Caco-2 (cell line): ENCODE measurements at regions of chr17 and their contacts with region 1.

Region 1: GRCh38 chr17:7056386-7056785 is 12.5 kb upstream of the SLC16A11 start:
- DNase-seq: no peak
- H3K4me3 ChIP-seq: no peak overlapping the region
- H3K4me3 Mint-ChIP-seq: no peak overlapping the region
- H3K27ac Mint-ChIP-seq: no peak overlapping the region
- H3K4me1 ChIP-seq: 0 out of 2 replicates have a peak, but pooled peaks cover 6% of the 10 kb centered on the region
- H3K4me1 Mint-ChIP-seq: peaks cover 7% of the 10 kb centered on the region
- H3K27me3 ChIP-seq: no peaks in the 10 kb centered on the region
- H3K27me3 Mint-ChIP-seq: no peaks in the 10 kb centered on the region
- CTCF ChIP-seq: no peak

Region 2: GRCh38 chr17:7083592-7083991 is 27.2 kb after region 1 on chr17:
- CTCF ChIA-PET with region 1: no interaction called
- POLR2A ChIA-PET with region 1: no interaction called
- intact Hi-C with region 1: loop called (anchors 2 kb)
- DNase-seq: no peak
- H3K4me3 ChIP-seq: no peak overlapping the region
- H3K4me3 Mint-ChIP-seq: no peak overlapping the region
- H3K27ac Mint-ChIP-seq: no peak overlapping the region
- H3K4me1 ChIP-seq: peaks cover 5% of the 10 kb centered on the region; the same call in 1 of the 2 replicates
- H3K4me1 Mint-ChIP-seq: peaks cover 16% of the 10 kb centered on the region
- H3K27me3 ChIP-seq: no peaks in the 10 kb centered on the region
- H3K27me3 Mint-ChIP-seq: no peaks in the 10 kb centered on the region
- CTCF ChIP-seq: no peak

Region 3: GRCh38 chr17:7114875-7115614 is 58.7 kb after region 1 on chr17:
- CTCF ChIA-PET with region 1: no interaction called
- POLR2A ChIA-PET with region 1: no interaction called
- intact Hi-C with region 1: no loop called
- DNase-seq: peak; percentile 13 to 42
- H3K4me3 ChIP-seq: no peak overlapping the region
- H3K4me3 Mint-ChIP-seq: peak overlapping the region; percentile 58
- H3K27ac Mint-ChIP-seq: no peak overlapping the region
- H3K4me1 ChIP-seq: peaks cover 21% of the 10 kb centered on the region
- H3K4me1 Mint-ChIP-seq: peaks cover 7% of the 10 kb centered on the region
- H3K27me3 ChIP-seq: no peaks in the 10 kb centered on the region
- H3K27me3 Mint-ChIP-seq: no peaks in the 10 kb centered on the region
- CTCF ChIP-seq: no peak

Region 4: GRCh38 chr17:7136266-7136877 is 80.0 kb after region 1 on chr17:
- CTCF ChIA-PET with region 1: interaction called, 5 read pairs
- POLR2A ChIA-PET with region 1: no interaction called
- intact Hi-C with region 1: loop called (anchors 1 kb)
- DNase-seq: peak; percentile 54 to 59
- H3K4me3 ChIP-seq: peak overlapping the region; percentile 17
- H3K4me3 Mint-ChIP-seq: peak overlapping the region; percentile 63
- H3K27ac Mint-ChIP-seq: no peak overlapping the region
- H3K4me1 ChIP-seq: peaks cover 3% of the 10 kb centered on the region
- H3K4me1 Mint-ChIP-seq: peaks cover 4% of the 10 kb centered on the region
- H3K27me3 ChIP-seq: no peaks in the 10 kb centered on the region
- H3K27me3 Mint-ChIP-seq: no peaks in the 10 kb centered on the region
- CTCF ChIP-seq: peak; percentile 60 to 70

Region 5: GRCh38 chr17:7167832-7168231 is 111.4 kb after region 1 on chr17:
- CTCF ChIA-PET with region 1: interaction called, 10 read pairs
- POLR2A ChIA-PET with region 1: no interaction called
- intact Hi-C with region 1: loop called (anchors 1 kb)
- DNase-seq: no peak
- H3K4me3 ChIP-seq: no peak overlapping the region
- H3K4me3 Mint-ChIP-seq: no peak overlapping the region
- H3K27ac Mint-ChIP-seq: no peak overlapping the region
- H3K4me1 ChIP-seq: no peaks in the 10 kb centered on the region
- H3K4me1 Mint-ChIP-seq: no peaks in the 10 kb centered on the region
- H3K27me3 ChIP-seq: no peaks in the 10 kb centered on the region
- H3K27me3 Mint-ChIP-seq: no peaks in the 10 kb centered on the region
- CTCF ChIP-seq: no peak

Region 6: DNA sequence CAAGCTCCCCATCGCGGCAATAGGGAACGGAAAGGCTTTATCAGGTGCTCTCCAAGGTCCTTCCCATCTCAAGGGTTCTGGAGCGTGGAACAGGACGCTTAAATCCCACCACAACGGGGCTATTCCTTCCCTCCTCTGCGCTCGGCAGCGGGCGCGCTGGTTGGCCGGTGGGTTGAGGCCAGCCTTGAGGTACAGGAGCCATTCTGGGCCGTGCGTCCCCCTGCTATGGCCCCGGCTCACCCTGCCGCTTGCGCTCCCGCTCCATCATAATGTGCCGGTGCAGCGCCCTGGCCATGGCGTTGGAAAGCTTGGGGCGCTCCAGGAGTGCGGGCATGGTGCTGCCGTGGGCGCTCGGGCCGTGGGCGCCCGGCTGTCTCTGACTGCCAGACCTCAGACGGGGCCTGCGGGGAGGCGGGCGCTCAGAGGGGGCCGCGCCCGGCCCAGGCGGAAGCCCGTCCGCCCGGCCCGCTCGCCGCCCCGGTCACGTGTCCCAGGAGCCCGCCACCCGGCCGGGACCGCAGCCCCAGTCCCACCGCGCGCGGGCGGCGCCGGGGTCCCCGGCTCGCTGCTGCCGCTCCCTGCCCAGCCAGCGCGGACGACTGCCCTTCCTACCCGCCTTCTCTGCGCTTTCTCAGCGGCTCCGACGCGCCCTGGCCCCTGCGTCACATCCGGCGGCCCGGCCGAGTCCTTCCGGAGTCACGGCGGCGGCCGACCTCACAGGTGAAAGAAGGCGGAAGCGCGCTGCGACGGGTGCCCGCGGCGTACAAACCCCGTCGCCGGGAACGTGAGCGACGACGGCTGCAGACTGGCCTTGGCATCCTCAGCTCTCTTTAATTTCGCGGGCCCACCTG is 258.6 kb after region 1 on chr17 and contains the start of gene GPS2:
- CTCF ChIA-PET with region 1: no interaction called
- POLR2A ChIA-PET with region 1: no interaction called
- intact Hi-C with region 1: no loop called
- DNase-seq: peak; percentile 81 to 86
- H3K4me3 ChIP-seq: peak within 1 kb of the TSS; percentile 82
- H3K4me3 Mint-ChIP-seq: peak within 1 kb of the TSS; percentile 82
- H3K27ac Mint-ChIP-seq: peak within 1 kb of the TSS; percentile 93
- H3K4me1 ChIP-seq: peaks cover 4% of the 10 kb centered on the region; the same call in 1 of the 2 replicates
- H3K4me1 Mint-ChIP-seq: peaks cover 18% of the 10 kb centered on the region
- H3K27me3 ChIP-seq: no peaks in the 10 kb centered on the region
- H3K27me3 Mint-ChIP-seq: no peaks in the 10 kb centered on the region
- CTCF ChIP-seq: no peak
- total RNA-seq, gene GPS2: 36.0 and 39.2 TPM in 2 replicates